ENCODE measurements at regions of chr9 and their contacts with region 1.

Region 1: GRCh38 chr9:107465467-107466451 is 23.8 kb downstream of the KLF4 start:
- DNase-seq: peak; percentile 69 to 82 (median 78)
- H3K4me3 ChIP-seq: peak overlapping the region; percentile 71 to 95 (median 89)
- H3K4me3 Mint-ChIP-seq: peak overlapping the region; percentile 87 to 93
- H3K27ac ChIP-seq: peak overlapping the region in 1 of 2 donors; percentile 79
- H3K27ac Mint-ChIP-seq: peak overlapping the region in 6 of 7 donors; percentile 77 to 93 (median 81)
- H3K4me1 ChIP-seq: peaks cover 10 to 18% of the 10 kb centered on the region in 2 donors
- H3K4me1 Mint-ChIP-seq: peaks cover 18% of the 10 kb centered on the region
- H3K27me3 ChIP-seq: no peaks in the 10 kb centered on the region
- H3K27me3 Mint-ChIP-seq: peaks cover 5 to 14% (median 11%) of the 10 kb centered on the region in 3 donors
- CTCF ChIP-seq: peak; percentile 98

Region 2: GRCh38 chr9:107359001-107359451 is 106.7 kb before region 1 on chr9:
- intact Hi-C with region 1: no loop called
- DNase-seq: no peak
- H3K4me3 ChIP-seq: no peak overlapping the region
- H3K4me3 Mint-ChIP-seq: no peak overlapping the region
- H3K27ac ChIP-seq: no peak overlapping the region
- H3K27ac Mint-ChIP-seq: no peak overlapping the region
- H3K4me1 ChIP-seq: no peaks in the 10 kb centered on the region
- H3K4me1 Mint-ChIP-seq: no peaks in the 10 kb centered on the region
- H3K27me3 ChIP-seq: no peaks in the 10 kb centered on the region
- H3K27me3 Mint-ChIP-seq: peaks cover 0 to 7% (median 0%) of the 10 kb centered on the region in 3 donors
- CTCF ChIP-seq: no peak

Region 3: GRCh38 chr9:108272349-108272899 is 806.7 kb after region 1 on chr9:
- intact Hi-C with region 1: loop called (anchors 5 to 10 kb)
- DNase-seq: peak; percentile 23 to 75 (median 59)
- H3K4me3 ChIP-seq: peak overlapping the region; percentile 10 to 85 (median 73)
- H3K4me3 Mint-ChIP-seq: peak overlapping the region; percentile 72 to 85
- H3K27ac ChIP-seq: peak overlapping the region in 1 of 2 donors; percentile 88
- H3K27ac Mint-ChIP-seq: peak overlapping the region; percentile 81 to 94 (median 92)
- H3K4me1 ChIP-seq: peaks cover 26 to 34% of the 10 kb centered on the region in 2 donors
- H3K4me1 Mint-ChIP-seq: peaks cover 44% of the 10 kb centered on the region
- H3K27me3 ChIP-seq: no peaks in the 10 kb centered on the region
- H3K27me3 Mint-ChIP-seq: peaks cover 0 to 3% (median 0%) of the 10 kb centered on the region in 3 donors
- CTCF ChIP-seq: peak; percentile 87

Region 4: GRCh38 chr9:108761655-108762347 is 1296.0 kb after region 1 on chr9:
- intact Hi-C with region 1: loop called in 1 of 2 experiments (anchors 5 kb)
- DNase-seq: peak; percentile 48 to 69 (median 56)
- H3K4me3 ChIP-seq: no peak overlapping the region
- H3K4me3 Mint-ChIP-seq: peak overlapping the region in 1 of 2 donors; percentile 26
- H3K27ac ChIP-seq: no peak overlapping the region
- H3K27ac Mint-ChIP-seq: peak overlapping the region in 1 of 7 donors; percentile 55
- H3K4me1 ChIP-seq: peaks cover 7 to 12% of the 10 kb centered on the region in 2 donors
- H3K4me1 Mint-ChIP-seq: peaks cover 17% of the 10 kb centered on the region
- H3K27me3 ChIP-seq: no peaks in the 10 kb centered on the region
- H3K27me3 Mint-ChIP-seq: no peaks in the 10 kb centered on the region
- CTCF ChIP-seq: peak; percentile 97

Measured in CD14-positive monocyte (primary cell).